Common myeloid progenitor, CD34-positive (primary cell): ENCODE measurements at regions of chr3 and their contacts with region 1.

Region 1: DNA sequence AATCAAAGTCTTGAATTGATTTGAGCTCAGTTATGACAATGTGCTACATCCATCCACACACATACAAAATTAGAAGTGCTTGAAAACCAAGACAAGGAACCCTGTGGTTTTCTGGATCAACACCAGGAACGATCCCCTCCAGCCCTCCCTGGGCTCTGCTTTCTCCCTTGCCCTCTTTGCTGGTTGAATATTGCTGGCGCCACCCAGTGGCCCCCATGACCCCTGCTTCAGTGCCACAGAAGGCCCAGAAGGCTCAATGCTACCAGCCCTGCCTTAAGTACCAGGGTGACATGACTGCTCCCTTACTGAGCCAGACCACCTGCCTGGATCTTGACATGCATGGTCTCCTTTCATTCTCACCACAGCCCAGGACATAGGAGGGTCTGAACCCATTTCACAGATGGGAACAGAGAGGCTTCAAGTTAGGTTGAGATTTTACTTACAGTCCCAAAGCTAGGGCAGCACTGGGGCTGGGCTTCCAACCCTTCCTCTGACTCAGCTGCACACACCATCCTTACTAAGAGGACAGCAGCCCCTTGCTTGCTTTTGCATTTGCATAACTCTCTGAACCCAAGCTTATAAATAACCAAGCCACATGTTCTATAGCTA is 15.0 kb downstream of the IL12A start:
- DNase-seq: peak; percentile 75 to 78 (median 77)
- H3K4me3 ChIP-seq: no peak overlapping the region
- H3K27ac ChIP-seq: no peak overlapping the region
- H3K4me1 ChIP-seq: peaks cover 0 to 18% (median 14%) of the 10 kb centered on the region in 4 experiments
- H3K27me3 ChIP-seq: no peaks in the 10 kb centered on the region

Region 2: GRCh38 chr3:159828542-159828943 is 175.1 kb before region 1 on chr3:
- CTCF ChIA-PET with region 1: interaction called, 21 read pairs
- POLR2A ChIA-PET with region 1: no interaction called
- DNase-seq: peak; percentile 66 to 77 (median 76)
- H3K4me3 ChIP-seq: peak overlapping the region in 1 of 7 experiments; percentile 51
- H3K27ac ChIP-seq: no peak overlapping the region
- H3K4me1 ChIP-seq: peaks cover 19 to 59% (median 50%) of the 10 kb centered on the region in 4 experiments
- H3K27me3 ChIP-seq: no peaks in the 10 kb centered on the region

Region 3: GRCh38 chr3:159892171-159892795 is 111.3 kb before region 1 on chr3:
- CTCF ChIA-PET with region 1: interaction called, 263 read pairs
- POLR2A ChIA-PET with region 1: no interaction called
- DNase-seq: no peak
- H3K4me3 ChIP-seq: no peak overlapping the region
- H3K27ac ChIP-seq: no peak overlapping the region
- H3K4me1 ChIP-seq: peaks cover 0 to 14% (median 8%) of the 10 kb centered on the region in 4 experiments
- H3K27me3 ChIP-seq: no peaks in the 10 kb centered on the region

Region 4: GRCh38 chr3:159947220-159947619 is 56.4 kb before region 1 on chr3:
- CTCF ChIA-PET with region 1: interaction called, 13 read pairs
- POLR2A ChIA-PET with region 1: no interaction called
- DNase-seq: no peak
- H3K4me3 ChIP-seq: no peak overlapping the region
- H3K27ac ChIP-seq: no peak overlapping the region
- H3K4me1 ChIP-seq: peaks cover 0 to 31% (median 17%) of the 10 kb centered on the region in 4 experiments
- H3K27me3 ChIP-seq: no peaks in the 10 kb centered on the region

Region 5: DNA sequence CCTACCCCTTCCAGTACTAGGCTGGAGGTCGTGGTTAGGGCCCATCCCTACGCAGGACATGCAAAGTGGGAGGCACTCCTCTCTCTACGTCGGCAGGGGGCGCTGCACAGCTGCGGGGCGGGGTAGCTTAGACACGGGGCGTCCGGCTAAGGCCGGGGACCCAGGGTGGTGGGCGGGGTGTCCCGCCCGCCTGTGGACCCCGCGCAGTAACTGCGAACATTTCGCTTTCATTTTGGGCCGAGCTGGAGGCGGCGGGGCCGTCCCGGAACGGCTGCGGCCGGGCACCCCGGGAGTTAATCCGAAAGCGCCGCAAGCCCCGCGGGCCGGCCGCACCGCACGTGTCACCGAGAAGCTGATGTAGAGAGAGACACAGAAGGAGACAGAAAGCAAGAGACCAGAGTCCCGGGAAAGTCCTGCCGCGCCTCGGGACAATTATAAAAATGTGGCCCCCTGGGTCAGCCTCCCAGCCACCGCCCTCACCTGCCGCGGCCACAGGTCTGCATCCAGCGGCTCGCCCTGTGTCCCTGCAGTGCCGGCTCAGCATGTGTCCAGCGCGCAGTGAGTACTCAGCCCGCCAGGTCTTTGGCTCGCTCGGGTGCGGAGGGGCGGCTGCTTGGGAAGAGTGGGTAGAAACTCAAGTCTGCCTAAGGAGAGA is 14.9 kb before region 1 on chr3 and contains the start of gene IL12A:
- CTCF ChIA-PET with region 1: interaction called, 231 read pairs
- POLR2A ChIA-PET with region 1: no interaction called
- DNase-seq: peak; percentile 90 to 93 (median 93)
- H3K4me3 ChIP-seq: peak within 1 kb of the TSS; percentile 68 to 93 (median 75)
- H3K27ac ChIP-seq: peak within 1 kb of the TSS; percentile 19 to 35
- H3K4me1 ChIP-seq: peaks cover 1 to 34% (median 20%) of the 10 kb centered on the region in 4 experiments
- H3K27me3 ChIP-seq: no peaks in the 10 kb centered on the region